Naive thymus-derived CD4-positive, alpha-beta T cell (primary cell): ENCODE measurements at regions of chr19 and their contacts with region 1.

Region 1: DNA sequence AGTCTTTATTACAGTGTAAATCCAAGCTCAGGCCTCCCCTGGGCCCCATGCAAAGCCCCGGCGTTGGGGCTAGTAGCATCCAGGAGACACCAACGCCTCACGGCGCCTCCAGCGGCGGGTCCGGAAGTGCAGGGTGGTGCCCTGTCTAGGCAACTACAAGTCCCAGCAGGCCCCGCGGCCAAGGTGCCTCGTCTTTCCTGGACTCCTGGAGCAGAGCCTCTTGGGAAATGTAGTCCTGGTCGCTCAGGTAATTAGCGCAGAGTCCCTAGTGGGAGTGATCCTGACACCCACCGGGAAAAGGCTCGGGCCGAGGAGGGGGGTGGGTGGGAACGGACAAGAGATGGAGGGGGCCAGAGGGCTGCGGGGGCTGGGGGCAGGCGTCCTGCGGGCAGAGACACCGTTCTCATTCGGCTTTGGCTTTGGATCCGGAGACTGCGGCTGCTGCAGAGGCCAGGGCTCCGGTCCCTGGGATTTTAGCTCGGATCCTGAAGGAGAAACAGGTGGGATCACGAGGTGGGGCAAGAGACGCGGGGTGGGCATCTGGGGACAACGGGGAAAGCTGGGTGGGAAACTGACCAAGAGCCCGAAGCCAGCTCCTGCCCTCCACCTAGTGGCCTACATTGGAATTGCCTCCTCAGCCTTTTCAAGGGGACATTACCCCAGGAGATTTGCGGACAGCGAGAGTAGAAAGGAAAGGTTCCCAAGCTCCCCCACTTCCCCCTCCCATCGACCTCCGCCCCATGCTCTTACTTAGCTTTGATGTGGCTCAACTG is 11.4 kb downstream of the RTN2 start:
- DNase-seq: peak; percentile 91 to 98 (median 95)
- ATAC-seq: peak; percentile 99
- H3K4me3 ChIP-seq: peak overlapping the region; percentile 85
- H3K4me3 Mint-ChIP-seq: peak overlapping the region; percentile 83 to 96 (median 90)
- H3K27ac ChIP-seq: peak overlapping the region; percentile 60
- H3K27ac Mint-ChIP-seq: peak overlapping the region in 8 of 9 donors; percentile 34 to 88 (median 82)
- H3K4me1 ChIP-seq: peaks cover 0 to 4% of the 10 kb centered on the region in 2 donors
- H3K4me1 Mint-ChIP-seq: peaks cover 0 to 13% (median 5%) of the 10 kb centered on the region in 7 donors
- H3K27me3 ChIP-seq: no peaks in the 10 kb centered on the region
- H3K27me3 Mint-ChIP-seq: peaks cover 0 to 7% (median 0%) of the 10 kb centered on the region in 5 donors

Region 2: DNA sequence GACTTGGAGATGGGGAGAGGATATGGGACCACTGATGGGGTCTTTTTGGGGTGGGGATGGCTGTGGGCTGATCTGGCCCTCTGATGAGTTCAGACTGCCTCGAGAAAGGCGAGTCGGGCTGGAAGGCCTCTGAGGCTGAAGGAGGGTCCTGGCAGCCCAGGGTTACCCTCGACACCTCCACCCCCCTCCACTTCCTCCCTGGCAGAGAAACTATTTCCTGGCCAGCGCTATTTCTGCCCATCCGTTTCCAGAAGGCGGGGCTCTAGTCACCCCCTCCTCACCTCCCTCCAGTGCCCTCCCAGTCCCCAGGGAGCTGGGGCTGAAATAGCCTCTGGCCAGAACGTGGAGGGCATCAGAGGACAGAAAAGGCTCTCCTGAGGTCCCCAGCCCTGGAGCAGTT is 250.0 kb before region 1 on chr19:
- CTCF ChIA-PET with region 1: no interaction called
- POLR2A ChIA-PET with region 1: no interaction called
- intact Hi-C with region 1: no loop called
- DNase-seq: no peak
- ATAC-seq: no peak
- H3K4me3 ChIP-seq: no peak overlapping the region
- H3K4me3 Mint-ChIP-seq: no peak overlapping the region
- H3K27ac ChIP-seq: no peak overlapping the region
- H3K27ac Mint-ChIP-seq: no peak overlapping the region
- H3K4me1 ChIP-seq: no peaks in the 10 kb centered on the region
- H3K4me1 Mint-ChIP-seq: peaks cover 0 to 9% (median 0%) of the 10 kb centered on the region in 7 donors
- H3K27me3 ChIP-seq: peaks cover 0 to 7% of the 10 kb centered on the region in 2 donors
- H3K27me3 Mint-ChIP-seq: peaks cover 25 to 53% (median 34%) of the 10 kb centered on the region in 5 donors

Region 3: DNA sequence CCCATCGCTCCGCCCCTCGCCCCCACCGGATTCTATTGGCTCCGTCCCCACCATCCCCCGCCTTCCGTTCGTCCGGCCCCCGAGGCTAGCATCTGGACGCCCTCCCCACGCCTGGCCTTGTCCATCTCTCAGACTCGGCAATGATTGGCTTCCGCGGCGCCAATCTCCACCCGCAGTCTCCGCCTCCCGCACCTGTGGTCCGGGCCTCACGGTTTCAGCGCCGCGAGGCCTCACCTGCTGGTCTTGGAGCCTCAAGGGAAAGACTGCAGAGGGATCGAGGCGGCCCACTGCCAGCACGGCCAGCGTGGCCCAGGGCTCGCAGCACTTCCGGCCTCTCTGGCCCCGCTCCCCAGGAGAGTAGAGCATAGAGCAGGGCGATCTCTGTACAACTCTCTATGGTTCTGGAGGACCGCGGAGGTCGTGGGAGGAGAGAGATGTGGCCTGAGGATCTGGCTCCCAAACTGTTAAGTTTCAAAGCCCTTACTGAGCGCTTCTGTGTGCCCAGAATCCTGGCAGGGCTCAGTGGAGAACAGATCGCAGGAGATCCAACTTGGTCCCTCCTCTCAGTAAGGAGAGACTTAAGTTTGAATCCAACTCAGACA is 61.8 kb before region 1 on chr19 and contains the start of gene ERCC1:
- CTCF ChIA-PET with region 1: interaction called, 8 read pairs
- POLR2A ChIA-PET with region 1: no interaction called
- intact Hi-C with region 1: loop called (anchors 1 kb)
- DNase-seq: peak in 7 of 9 donors; percentile 25 to 83 (median 52)
- ATAC-seq: peak; percentile 71
- H3K4me3 ChIP-seq: peak within 1 kb of the TSS; percentile 72
- H3K4me3 Mint-ChIP-seq: peak within 1 kb of the TSS; percentile 88 to 100 (median 94)
- H3K27ac ChIP-seq: peak within 1 kb of the TSS; percentile 77
- H3K27ac Mint-ChIP-seq: peak within 1 kb of the TSS; percentile 83 to 97 (median 91)
- H3K4me1 ChIP-seq: peaks cover 24 to 28% of the 10 kb centered on the region in 2 donors
- H3K4me1 Mint-ChIP-seq: peaks cover 22 to 57% (median 50%) of the 10 kb centered on the region in 7 donors
- H3K27me3 ChIP-seq: peaks cover 0 to 3% of the 10 kb centered on the region in 2 donors
- H3K27me3 Mint-ChIP-seq: peaks cover 0 to 10% (median 3%) of the 10 kb centered on the region in 5 donors
- total RNA-seq, gene ERCC1: 45.1 to 88.2 (median 53.4) TPM

Region 4: DNA sequence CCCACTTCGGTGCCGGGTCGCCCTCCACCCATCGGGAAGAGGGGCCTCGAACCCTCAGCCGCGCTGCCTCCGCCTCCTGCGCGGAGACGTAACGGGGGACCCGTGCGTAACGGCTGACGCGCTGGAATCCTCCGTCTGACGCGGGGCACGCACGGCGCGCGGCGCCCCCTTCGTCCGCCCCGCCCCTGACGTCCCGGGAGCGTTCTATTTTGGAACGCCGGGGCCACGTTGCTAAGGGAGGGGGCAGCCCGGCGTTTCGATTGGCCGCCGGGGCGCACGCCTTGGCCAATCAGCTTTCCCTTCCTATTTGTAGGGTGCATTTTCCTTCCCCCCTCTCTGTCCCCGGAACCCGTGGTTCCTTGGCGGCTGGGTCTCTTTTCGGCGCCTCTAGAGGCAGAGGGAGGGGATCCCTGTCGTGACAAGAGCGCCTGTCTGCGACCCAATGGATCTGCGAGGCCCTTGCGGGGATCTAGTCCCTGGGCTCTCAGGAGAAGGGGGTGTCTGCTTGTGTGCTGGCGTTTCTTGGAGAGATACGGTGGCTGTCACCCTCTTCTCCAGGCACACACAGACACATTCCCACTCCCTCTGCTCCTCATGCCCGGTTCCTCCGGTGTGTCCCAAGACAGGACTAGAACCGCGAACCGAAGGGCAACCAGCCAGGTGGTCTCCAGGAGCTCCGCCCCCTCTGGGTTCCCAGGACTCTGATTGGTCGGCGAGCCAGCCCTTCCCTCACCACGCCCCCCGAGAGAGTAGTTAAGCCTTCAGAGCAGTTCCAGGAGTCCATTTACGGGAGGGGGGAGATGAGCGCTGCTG is 16.2 kb before region 1 on chr19:
- CTCF ChIA-PET with region 1: interaction called, 8 read pairs
- POLR2A ChIA-PET with region 1: interaction called, 3 read pairs
- intact Hi-C with region 1: loop called in 1 of 2 experiments (anchors 2 kb)
- DNase-seq: peak; percentile 79 to 98 (median 97)
- ATAC-seq: peak; percentile 70
- H3K4me3 ChIP-seq: peak overlapping the region; percentile 99
- H3K4me3 Mint-ChIP-seq: peak overlapping the region; percentile 87 to 96 (median 94)
- H3K27ac ChIP-seq: peak overlapping the region; percentile 98
- H3K27ac Mint-ChIP-seq: peak overlapping the region; percentile 90 to 100 (median 99)
- H3K4me1 ChIP-seq: peaks cover 10 to 16% of the 10 kb centered on the region in 2 donors
- H3K4me1 Mint-ChIP-seq: peaks cover 5 to 39% (median 19%) of the 10 kb centered on the region in 7 donors
- H3K27me3 ChIP-seq: no peaks in the 10 kb centered on the region
- H3K27me3 Mint-ChIP-seq: peaks cover 9 to 57% (median 17%) of the 10 kb centered on the region in 5 donors

Region 5: DNA sequence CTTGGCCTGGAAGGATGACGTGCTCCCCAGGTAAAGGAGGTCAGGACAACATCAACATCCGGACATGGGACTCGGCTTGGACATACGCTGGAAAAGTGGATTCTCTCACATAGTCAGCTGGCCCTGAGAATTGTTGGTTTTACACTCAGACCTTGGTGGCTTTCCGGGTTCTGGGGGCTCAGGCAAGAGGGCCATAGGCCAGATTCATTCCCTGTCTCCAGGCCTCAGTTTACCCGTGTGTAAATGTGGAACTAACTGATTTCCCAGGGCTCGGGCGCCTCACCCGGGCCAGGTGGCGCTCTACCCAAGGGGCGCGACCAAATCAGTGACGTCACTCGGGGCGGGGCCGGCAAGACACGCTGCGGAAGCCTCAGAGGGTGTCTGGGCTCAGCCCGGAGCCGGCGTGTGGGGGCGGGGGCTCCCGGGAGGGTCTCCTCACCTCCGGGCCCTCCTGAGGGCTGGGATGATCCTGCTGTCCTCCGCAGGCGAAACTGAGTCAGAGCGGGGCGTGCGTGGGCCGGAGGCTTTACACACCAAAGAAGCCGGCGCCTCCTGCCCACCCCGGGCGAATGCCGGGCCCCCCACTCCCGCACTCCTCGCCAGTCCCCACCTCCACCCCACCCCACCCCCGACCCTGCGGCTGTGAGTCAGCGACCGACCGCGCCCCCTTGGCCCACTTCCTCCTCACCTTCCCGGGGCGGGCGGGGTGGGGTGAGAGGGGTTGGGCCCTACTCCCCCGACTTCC is 20.9 kb after region 1 on chr19:
- CTCF ChIA-PET with region 1: interaction called, 11 read pairs
- POLR2A ChIA-PET with region 1: interaction called, 3 read pairs
- intact Hi-C with region 1: loop called (anchors 1 to 2 kb)
- DNase-seq: peak; percentile 95 to 99 (median 98)
- ATAC-seq: peak; percentile 88
- H3K4me3 ChIP-seq: peak overlapping the region; percentile 99
- H3K4me3 Mint-ChIP-seq: peak overlapping the region; percentile 91 to 96 (median 94)
- H3K27ac ChIP-seq: peak overlapping the region; percentile 87
- H3K27ac Mint-ChIP-seq: peak overlapping the region; percentile 91 to 98 (median 97)
- H3K4me1 ChIP-seq: peaks cover 14 to 20% of the 10 kb centered on the region in 2 donors
- H3K4me1 Mint-ChIP-seq: peaks cover 29 to 46% (median 34%) of the 10 kb centered on the region in 7 donors
- H3K27me3 ChIP-seq: no peaks in the 10 kb centered on the region
- H3K27me3 Mint-ChIP-seq: no peaks in the 10 kb centered on the region

Region 6: DNA sequence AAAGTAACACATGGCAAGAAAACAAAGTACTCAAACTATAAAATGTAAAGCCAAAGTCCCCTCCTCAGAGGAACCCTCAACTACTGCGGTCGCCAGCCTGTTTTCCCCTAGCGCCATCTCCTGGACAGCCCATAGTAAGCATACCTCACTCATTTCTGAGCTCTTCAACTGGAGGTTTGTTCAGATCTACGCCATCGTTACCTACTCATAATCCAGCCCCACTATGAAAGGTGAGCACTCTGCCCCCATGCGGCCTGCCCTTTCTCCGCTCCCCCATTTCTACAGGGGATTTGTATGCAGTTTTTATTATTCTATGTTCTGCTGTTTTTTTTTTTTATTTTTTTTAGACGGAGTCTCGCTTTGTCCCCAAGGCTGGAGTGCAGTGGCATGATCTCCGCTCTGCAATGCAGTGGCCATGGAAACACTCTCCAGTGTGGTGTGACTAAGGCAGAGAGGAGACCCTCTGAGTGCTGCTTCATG is 72.9 kb after region 1 on chr19:
- CTCF ChIA-PET with region 1: interaction called, 3 read pairs
- POLR2A ChIA-PET with region 1: interaction called, 3 read pairs
- intact Hi-C with region 1: loop called in 1 of 2 experiments (anchors 1 kb)
- DNase-seq: peak; percentile 37 to 85 (median 81)
- ATAC-seq: peak; percentile 99
- H3K4me3 ChIP-seq: no peak overlapping the region
- H3K4me3 Mint-ChIP-seq: peak overlapping the region in 3 of 10 donors; percentile 52 to 75 (median 59)
- H3K27ac ChIP-seq: peak overlapping the region; percentile 18
- H3K27ac Mint-ChIP-seq: peak overlapping the region in 8 of 9 donors; percentile 14 to 86 (median 66)
- H3K4me1 ChIP-seq: peaks cover 0 to 29% of the 10 kb centered on the region in 2 donors
- H3K4me1 Mint-ChIP-seq: peaks cover 20 to 48% (median 34%) of the 10 kb centered on the region in 7 donors
- H3K27me3 ChIP-seq: no peaks in the 10 kb centered on the region
- H3K27me3 Mint-ChIP-seq: no peaks in the 10 kb centered on the region

Region 7: DNA sequence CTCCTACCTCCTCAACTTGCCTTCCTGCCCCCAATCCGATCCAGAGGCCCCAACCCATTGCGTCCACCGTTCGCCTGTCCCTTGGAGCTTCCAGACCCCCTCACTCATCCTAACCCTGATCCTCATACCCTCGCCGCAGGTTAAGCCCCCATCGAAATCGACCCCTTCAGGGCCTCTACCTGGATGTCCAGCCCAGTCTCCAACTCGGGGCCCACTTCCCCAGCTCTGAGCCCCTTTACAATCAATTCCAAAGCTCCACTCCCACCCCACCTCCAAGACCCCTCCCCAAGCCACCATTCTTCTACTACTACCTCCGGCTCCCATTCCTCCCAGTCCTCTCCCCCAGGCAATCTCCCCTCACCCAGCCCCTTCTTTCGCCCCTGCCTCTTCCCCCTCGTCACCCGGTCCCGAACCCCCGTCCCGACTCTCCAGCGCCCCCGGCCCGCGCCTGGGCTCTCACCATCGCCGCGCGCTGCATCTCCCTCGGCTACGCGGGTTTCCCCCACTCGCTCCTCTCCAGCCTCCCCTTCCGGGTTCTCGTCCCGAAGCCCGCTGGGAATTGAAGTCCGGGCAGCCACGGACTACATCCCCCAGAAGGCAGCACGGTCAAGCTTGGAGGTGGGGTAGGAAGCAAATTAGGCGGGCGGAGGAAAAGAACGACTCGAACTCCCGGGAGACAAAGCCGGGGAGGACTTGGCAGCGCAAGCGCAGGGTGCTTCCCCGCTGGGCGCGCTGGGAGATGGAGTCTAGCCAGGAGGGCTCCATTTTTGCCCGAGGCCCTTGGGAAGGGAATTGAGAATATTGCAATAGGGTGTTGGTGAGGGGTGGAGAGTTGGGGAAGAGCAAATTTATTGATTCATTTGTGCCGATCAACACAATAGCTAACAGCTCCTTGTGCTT is 245.1 kb after region 1 on chr19 and contains the start of gene FBXO46:
- CTCF ChIA-PET with region 1: no interaction called
- POLR2A ChIA-PET with region 1: no interaction called
- intact Hi-C with region 1: loop called in 1 of 2 experiments (anchors 2 kb)
- DNase-seq: peak; percentile 74 to 94 (median 90)
- ATAC-seq: peak; percentile 99
- H3K4me3 ChIP-seq: peak within 1 kb of the TSS; percentile 96
- H3K4me3 Mint-ChIP-seq: peak within 1 kb of the TSS; percentile 85 to 98 (median 92)
- H3K27ac ChIP-seq: peak within 1 kb of the TSS; percentile 92
- H3K27ac Mint-ChIP-seq: peak within 1 kb of the TSS; percentile 60 to 93 (median 91)
- H3K4me1 ChIP-seq: peaks cover 6 to 14% of the 10 kb centered on the region in 2 donors
- H3K4me1 Mint-ChIP-seq: peaks cover 27 to 41% (median 33%) of the 10 kb centered on the region in 7 donors
- H3K27me3 ChIP-seq: no peaks in the 10 kb centered on the region
- H3K27me3 Mint-ChIP-seq: peaks cover 0 to under 1% (median 0%) of the 10 kb centered on the region in 5 donors
- total RNA-seq, gene FBXO46: 21.2 to 52.9 (median 36.6) TPM